K562 (cell line): ENCODE measurements at regions of chr14 and their contacts with region 1.

Region 1: DNA sequence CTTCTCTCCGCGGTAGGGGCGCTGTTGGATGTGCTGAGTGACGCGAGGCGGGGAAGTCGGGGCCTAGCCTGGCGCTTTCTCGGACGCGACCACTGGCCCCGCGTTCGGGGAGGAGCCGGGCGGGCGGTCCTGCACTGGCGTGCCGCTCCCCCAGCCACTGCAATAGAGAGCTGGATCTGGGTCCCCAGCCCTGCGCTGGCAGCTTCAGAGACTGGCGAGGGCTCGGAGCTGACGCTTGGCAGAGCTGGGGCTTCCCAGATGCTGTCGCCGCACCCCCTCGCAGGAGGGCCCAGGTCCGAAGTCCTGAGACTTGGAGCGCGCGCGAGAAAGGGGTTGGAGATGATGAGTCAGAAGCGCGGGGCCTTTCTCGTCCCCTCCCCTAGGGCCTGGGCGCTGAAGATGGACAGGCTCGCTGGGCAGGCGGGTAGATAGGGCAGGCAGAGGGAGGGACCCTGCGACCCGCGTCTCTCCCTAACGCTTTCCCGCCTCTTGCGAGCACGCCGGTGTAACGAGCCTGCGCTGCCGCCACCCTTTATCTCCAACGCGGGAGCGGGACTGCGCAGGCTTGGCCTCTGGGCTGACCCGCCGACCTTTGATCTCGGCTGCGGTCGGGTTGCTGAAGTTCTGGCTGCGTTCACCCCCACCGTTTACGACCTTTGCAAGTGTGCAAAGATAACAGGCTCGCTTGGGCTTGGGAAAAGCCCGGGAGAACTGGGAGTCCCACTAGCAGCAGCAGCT is 3.0 kb downstream of the TMEM253 start:
- DNase-seq: peak; percentile 84 to 94 (median 87)
- ATAC-seq: peak; percentile 89
- H3K4me3 ChIP-seq: peak overlapping the region; percentile 42
- H3K27ac ChIP-seq: peak overlapping the region; percentile 96
- H3K4me1 ChIP-seq: peaks cover 46 to 65% of the 10 kb centered on the region in 2 experiments
- H3K27me3 ChIP-seq: no peaks in the 10 kb centered on the region
- CTCF ChIP-seq: peak; percentile 60 to 72 (median 70)
- EP300 ChIP-seq: peak; percentile 50; the same call in 1 of the 2 replicates
- POLR2A ChIP-seq: peak; percentile 82
- RAD21 ChIP-seq: no peak

Region 2: DNA sequence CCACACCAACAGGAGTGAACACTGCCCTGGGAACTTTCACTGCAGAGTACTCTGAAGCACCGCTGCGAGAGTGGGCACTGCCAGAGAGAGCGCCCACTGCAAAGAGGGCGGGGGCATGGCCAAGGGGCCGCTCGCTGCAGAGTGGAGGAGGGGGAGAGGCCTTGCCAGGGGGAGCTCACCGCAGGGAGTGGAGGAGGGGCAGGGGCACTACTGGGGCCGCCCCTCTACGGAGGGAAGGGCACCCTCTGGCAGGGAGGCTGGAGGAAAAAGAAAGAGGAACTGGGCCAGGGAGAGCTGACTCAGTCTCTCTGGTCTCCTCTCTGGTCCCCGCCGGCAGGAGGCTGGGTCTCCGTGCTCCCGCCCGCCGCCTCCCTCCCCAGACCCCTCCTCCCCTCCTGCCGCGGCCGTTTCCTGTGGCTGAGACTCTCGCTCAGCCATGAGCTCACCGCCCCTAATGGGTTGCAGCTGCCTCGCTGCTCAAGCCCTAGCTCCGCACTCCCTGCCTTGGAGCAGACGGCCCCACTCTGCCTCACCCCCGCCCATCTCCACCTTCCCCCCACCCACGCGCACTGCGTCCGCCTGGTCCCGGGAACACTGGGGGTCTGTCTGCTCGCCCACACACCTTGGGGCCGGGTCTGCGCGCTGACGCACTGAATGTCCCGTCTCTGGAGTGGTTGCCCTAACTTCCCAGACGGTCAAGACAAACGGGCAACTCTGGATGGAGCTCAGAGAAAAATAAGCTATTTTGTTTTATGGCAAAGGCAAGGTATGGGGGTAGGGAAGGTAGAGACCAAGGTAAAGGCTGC is 32.5 kb before region 1 on chr14:
- CTCF ChIA-PET with region 1: interaction called, 54 read pairs
- POLR2A ChIA-PET with region 1: interaction called, 6 read pairs
- in situ Hi-C with region 1: no loop called
- intact Hi-C with region 1: loop called (anchors 1 kb)
- DNase-seq: peak; percentile 58 to 76 (median 62)
- ATAC-seq: peak; percentile 72
- H3K4me3 ChIP-seq: 0 out of 2 replicates have a peak overlapping the region, but pooled peaks have one; percentile 13
- H3K27ac ChIP-seq: no peak overlapping the region; the same call in 2 of the 3 replicates
- H3K4me1 ChIP-seq: peaks cover 2 to 41% of the 10 kb centered on the region in 2 experiments; a peak in 3 of 5 replicates
- H3K27me3 ChIP-seq: no peaks in the 10 kb centered on the region
- CTCF ChIP-seq: no peak
- EP300 ChIP-seq: no peak
- POLR2A ChIP-seq: no peak
- RAD21 ChIP-seq: no peak

Region 3: DNA sequence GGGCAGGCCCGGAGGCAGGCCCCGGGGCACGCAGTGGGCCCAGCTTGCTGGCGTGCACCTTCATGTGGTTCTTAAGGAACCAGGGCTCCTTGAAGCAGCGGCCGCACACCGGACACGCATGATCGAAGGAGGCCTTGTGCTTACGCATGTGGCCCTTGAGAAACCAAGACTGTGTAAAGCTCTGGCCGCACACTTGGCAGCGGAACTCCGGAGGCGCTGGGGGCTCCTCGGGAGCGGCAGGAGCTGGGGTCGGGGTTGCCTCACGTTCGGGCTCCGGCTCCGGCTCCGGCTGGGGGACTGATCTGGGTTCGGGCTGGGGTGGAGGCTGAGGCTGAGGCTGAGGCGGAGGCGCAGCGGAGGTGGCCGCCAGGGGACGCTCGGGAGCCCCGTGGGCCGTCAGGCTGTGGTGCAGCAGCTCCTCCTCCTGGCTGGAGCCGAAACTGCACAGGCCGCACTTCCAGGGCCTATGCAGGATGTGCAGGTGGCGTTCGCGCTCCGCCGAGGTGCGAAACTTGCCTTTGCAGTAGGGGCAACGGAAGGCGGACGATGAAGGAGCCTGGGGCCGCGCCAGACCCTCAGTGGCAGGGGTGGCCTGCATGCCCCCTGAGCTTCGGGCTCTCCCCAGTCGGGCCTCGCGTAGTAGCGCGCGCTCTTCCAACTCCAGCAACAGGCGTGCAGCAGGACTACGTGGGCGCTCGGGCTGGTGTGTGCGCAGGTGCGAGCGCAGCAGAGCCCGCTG is 11.4 kb before region 1 on chr14:
- CTCF ChIA-PET with region 1: interaction called, 13 read pairs
- POLR2A ChIA-PET with region 1: interaction called, 4 read pairs
- in situ Hi-C with region 1: no loop called
- intact Hi-C with region 1: loop called (anchors 1 kb)
- DNase-seq: peak; percentile 72 to 78 (median 74)
- ATAC-seq: peak; percentile 88
- H3K4me3 ChIP-seq: no peak overlapping the region
- H3K27ac ChIP-seq: no peak overlapping the region
- H3K4me1 ChIP-seq: peaks cover 4 to 29% of the 10 kb centered on the region in 2 experiments; a peak in 4 of 5 replicates
- H3K27me3 ChIP-seq: no peaks in the 10 kb centered on the region
- CTCF ChIP-seq: peak; percentile 98 to 100 (median 100)
- EP300 ChIP-seq: no peak
- POLR2A ChIP-seq: no peak
- RAD21 ChIP-seq: peak; percentile 92 to 98

Region 4: DNA sequence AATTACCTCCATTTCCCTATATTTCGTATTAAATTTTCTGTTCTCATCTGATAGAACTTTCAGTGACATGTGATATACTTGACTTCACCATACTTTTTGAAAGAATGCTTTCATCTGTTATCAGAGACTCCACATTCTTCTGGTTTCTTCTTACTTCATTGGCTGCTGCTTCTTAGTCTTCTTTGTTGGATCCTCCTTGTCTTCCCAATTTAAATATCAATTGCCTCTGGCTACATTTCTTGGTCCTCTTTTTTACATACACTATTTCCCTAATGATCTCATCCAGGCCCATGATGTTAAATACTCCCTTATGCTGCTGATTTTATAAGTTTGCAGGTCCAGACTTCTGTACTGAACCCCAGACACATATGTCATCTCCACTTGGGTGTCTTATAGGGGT is 30.0 kb after region 1 on chr14:
- CTCF ChIA-PET with region 1: no interaction called
- POLR2A ChIA-PET with region 1: no interaction called
- in situ Hi-C with region 1: no loop called
- intact Hi-C with region 1: loop called (anchors 2 kb)
- DNase-seq: no peak
- ATAC-seq: 0 out of 3 replicates have a peak, but pooled peaks have one; percentile 34
- H3K4me3 ChIP-seq: no peak overlapping the region
- H3K27ac ChIP-seq: no peak overlapping the region
- H3K4me1 ChIP-seq: no peaks in the 10 kb centered on the region; a peak in 1 of 5 replicates
- H3K27me3 ChIP-seq: no peaks in the 10 kb centered on the region
- CTCF ChIP-seq: no peak
- EP300 ChIP-seq: no peak
- POLR2A ChIP-seq: no peak
- RAD21 ChIP-seq: no peak